Heart left ventricle (tissue), 16 donors: ENCODE measurements at regions of chr19 and their contacts with region 1.

Region 1: GRCh38 chr19:9834726-9835506 is at the start of gene PIN1:
- DNase-seq: peak; percentile 99
- ATAC-seq: peak; percentile 98 to 100 (median 100)
- H3K4me3 ChIP-seq: peak within 1 kb of the TSS; percentile 86 to 100 (median 93)
- H3K27ac ChIP-seq: peak within 1 kb of the TSS in 11 of 12 donors; percentile 62 to 86 (median 74)
- H3K4me1 ChIP-seq: peaks cover 0 to 42% (median 14%) of the 10 kb centered on the region in 12 donors
- H3K27me3 ChIP-seq: no peaks in the 10 kb centered on the region
- CTCF ChIP-seq: peak; percentile 55 to 93 (median 71)
- POLR2A ChIP-seq: peak in 1 of 2 donors; percentile 40
- total RNA-seq, gene PIN1: 82.8 to 147 (median 93.1) TPM

Region 2: DNA sequence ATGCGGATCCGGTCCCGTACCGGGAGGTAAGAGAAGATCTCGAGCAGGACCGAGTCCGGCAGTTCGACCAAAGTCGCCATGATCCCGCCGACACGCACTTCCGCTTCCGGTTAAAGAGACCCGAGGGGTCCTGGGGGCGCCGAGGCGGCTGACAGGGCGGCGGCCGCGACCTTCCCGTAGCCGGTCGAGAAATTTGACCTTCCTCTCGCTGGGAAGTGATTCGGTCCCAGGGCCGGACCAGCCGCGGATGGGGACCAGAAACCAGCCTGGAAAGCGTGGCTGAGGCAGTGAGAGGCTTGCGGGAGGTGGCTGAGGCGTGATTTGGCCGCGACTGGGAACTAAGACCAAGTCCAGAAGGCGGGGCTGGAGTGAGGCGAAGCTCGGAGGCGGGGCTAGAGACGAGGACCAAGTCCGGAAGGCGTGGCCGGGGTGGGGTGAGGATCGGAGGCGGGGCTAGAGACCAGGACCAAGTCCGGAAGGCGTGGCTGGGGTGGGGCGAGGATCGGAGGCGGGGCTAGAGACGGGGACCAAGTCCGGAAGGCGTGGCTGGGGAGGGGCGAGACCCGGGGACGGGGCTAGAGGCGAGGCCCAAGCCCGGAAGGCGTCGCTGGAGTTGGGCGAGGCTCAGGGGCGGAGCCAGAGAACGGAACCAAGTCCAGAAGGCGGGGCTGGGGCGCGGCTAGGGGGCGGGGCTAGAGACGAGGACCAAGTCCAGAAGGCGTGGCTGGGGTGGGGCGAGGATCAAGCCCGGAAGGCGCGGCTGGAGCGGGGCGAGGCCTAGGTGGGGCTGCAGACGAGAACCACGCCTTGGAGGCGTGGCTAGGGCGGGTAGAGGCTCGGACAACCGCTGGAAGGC is 16.0 kb before region 1 on chr19 and contains the start of gene FBXL12:
- intact Hi-C with region 1: loop called in 2 of 10 experiments (anchors 1 to 2 kb)
- DNase-seq: peak; percentile 100
- ATAC-seq: peak; percentile 95 to 96 (median 96)
- H3K4me3 ChIP-seq: peak within 1 kb of the TSS; percentile 69 to 98 (median 88)
- H3K27ac ChIP-seq: peak within 1 kb of the TSS; percentile 88 to 98 (median 96)
- H3K4me1 ChIP-seq: peaks cover 4 to 26% (median 18%) of the 10 kb centered on the region in 12 donors
- H3K27me3 ChIP-seq: no peaks in the 10 kb centered on the region
- CTCF ChIP-seq: no peak
- POLR2A ChIP-seq: peak; percentile 36 to 84
- total RNA-seq, gene FBXL12: 9.8 to 17.6 (median 12.2) TPM